H1 (cell line): ENCODE measurements at regions of chr9 and their contacts with region 1.

Region 1: DNA sequence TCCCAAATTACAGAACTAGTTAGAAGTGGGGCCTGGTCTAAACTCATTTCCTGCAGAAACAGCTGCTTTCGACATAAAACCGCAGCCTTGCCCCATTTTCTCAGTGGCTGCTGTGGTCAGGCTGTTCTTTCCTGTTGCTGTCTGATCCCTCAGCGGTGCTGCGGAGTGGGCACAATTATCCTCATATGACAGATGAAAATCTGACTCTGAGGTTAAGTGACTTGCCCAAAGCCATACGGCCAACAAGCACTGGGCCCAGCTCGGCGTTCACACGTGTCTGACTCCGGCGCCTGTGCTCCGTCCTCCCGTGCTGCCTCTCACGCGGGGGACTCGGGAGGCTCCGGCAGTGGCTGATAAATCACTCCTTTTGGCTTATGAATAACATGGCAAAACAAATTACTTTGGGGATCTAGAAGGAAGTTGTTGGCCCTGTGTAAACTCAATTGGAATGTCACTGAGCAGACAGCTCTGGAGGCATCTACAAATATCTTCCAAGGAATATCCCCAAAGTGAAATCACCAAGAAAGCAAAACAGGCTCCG is 142.6 kb upstream of the LMX1B start:
- DNase-seq: no peak
- H3K4me3 ChIP-seq: no peak overlapping the region
- H3K27ac ChIP-seq: no peak overlapping the region
- H3K4me1 ChIP-seq: peaks cover 0 to 13% (median 3%) of the 10 kb centered on the region in 4 experiments; a peak in 3 of 7 replicates
- H3K27me3 ChIP-seq: no peaks in the 10 kb centered on the region
- CTCF ChIP-seq: no peak
- EP300 ChIP-seq: no peak
- POLR2A ChIP-seq: no peak
- RAD21 ChIP-seq: no peak

Region 2: DNA sequence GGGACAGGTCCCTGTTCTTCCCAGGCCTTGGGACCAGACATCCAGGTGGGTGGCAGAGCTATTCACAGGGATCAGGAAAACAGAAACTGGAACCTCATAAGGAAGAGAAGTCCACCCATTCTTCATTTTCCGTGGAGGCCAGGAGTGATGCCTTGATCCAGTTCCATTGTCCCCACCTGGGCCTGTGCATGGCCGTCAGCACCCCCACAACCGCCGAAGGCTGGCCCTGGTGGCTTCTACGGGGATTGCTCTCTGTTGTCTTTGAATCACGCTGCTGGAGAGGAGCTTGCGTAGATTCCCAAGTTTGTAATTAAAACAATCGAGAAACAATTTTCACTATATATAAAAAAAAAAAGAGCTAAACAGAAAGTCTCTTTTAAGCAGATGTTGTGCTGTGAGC is 10.1 kb before region 1 on chr9:
- CTCF ChIA-PET with region 1: interaction called, 12 read pairs
- POLR2A ChIA-PET with region 1: no interaction called
- DNase-seq: no peak
- H3K4me3 ChIP-seq: no peak overlapping the region
- H3K27ac ChIP-seq: no peak overlapping the region
- H3K4me1 ChIP-seq: no peaks in the 10 kb centered on the region
- H3K27me3 ChIP-seq: no peaks in the 10 kb centered on the region
- CTCF ChIP-seq: peak in 2 of 3 experiments; percentile 22 to 36; a peak in 2 of 4 replicates
- EP300 ChIP-seq: no peak
- POLR2A ChIP-seq: no peak
- RAD21 ChIP-seq: no peak